ENCODE measurements at regions of chr6 and their contacts with region 1.

Region 1: DNA sequence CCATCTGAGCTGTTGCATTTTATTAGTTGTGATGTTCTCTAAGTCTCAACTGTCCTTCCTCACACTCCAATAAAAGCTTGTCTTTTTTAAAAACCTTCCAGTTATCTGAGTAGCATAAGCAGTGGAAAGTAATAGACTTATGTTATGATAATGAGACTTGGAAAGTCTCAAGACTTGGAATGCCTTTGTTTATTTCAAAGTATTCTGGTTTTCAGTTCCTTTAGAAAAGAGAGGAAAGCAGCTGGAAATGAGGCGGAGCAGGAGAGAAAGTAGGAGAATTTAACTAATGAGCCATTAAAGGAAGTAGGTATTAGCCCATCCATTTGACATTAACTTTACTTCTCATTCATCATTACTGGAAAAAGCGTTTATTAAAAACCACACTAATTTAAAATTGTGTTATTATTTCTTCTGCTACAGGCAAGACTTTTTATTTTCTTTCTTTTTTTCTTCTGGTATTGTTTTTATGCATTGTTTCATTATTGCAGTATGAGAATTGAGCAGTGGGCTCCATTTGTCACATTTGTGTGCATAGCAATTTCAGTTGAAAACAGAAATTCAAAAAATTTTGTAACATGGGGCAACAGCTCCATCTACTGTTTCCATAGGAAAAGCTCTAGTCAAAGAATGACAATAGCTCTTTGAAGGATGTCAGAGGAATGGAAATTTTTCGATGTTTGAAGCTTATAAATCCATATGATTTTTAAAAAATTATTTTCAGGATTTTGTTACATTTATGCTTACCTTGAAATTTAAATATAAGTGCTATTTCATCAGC is 194.8 kb downstream of the COL9A1 start:
- DNase-seq: peak; percentile 30
- CTCF ChIP-seq: peak; percentile 42

Region 2: DNA sequence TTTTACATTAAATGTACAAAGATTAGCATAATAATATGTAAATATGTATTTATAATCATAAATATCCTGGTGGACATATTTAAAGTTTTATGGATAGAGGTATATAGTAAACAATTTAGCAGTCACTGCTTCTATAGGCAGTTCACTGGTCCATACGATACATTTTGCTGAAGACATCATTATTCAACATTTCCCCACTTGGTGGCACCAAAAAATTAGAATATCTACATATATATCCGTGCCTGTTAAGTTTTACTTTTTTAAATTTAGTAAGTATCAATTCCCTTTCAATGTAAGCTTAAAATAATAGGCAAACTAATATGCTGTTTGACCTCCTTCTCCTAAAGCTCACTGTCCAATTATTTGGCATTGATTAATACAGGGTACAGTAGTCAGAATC is 375.4 kb before region 1 on chr6:
- in situ Hi-C with region 1: loop called (anchors 25 kb)
- DNase-seq: peak; percentile 28
- CTCF ChIP-seq: peak; percentile 21

Region 3: GRCh38 chr6:69835414-69836179 is 272.4 kb before region 1 on chr6:
- in situ Hi-C with region 1: loop called (anchors 25 kb)
- DNase-seq: peak; percentile 11
- CTCF ChIP-seq: peak; percentile 75

Region 4: GRCh38 chr6:70327036-70327435 is 219.0 kb after region 1 on chr6:
- in situ Hi-C with region 1: no loop called
- DNase-seq: no peak
- CTCF ChIP-seq: no peak